ENCODE measurements at regions of chr19 and their contacts with region 1.

Region 1: GRCh38 chr19:4352701-4353121 is 9.3 kb downstream of the MPND start:
- DNase-seq: peak; percentile 70
- H3K4me3 Mint-ChIP-seq: no peak overlapping the region
- H3K27ac Mint-ChIP-seq: no peak overlapping the region
- H3K4me1 Mint-ChIP-seq: peaks cover 2% of the 10 kb centered on the region
- H3K27me3 Mint-ChIP-seq: peaks cover 2% of the 10 kb centered on the region

Region 2: DNA sequence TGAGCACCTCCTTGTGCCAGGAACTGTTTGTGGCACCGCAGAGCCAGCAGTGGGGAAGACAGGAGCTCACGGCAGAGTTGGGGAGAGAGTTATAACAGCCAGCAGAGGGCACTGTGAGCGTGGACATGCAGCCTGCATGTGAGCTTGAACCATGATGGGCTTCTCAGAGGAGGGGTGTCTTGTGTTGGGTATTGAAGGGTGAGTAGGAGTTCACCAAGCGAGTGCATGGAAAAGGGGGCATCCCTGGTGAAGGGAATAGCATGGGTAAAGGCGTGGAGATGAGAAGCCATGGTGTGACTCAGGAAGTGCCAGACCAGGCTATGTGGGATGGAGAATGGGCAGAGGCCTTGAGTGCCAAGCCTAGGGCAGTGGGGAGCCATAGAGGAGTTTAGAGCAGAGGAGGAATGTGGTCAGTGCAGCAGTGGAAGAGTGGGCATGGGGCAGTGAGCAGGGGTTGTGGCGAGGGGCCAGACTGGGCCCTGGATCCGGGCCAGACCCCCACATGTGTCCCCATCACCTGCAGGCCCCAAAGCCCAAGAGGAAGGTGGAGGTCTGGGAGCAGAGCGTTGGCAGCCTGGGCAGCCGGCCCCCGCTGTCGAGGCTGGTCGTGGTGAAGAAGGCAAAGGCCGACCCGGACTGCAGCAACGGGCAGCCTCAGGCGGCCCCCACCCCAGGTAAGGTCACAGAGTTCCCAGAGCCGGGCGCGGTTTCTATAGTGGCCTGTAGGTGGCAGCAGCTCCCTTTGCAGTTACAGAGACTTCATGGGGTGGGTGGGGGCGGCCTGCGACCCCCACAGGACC is 85.4 kb before region 1 on chr19:
- CTCF ChIA-PET with region 1: interaction called, 72 read pairs
- DNase-seq: peak; percentile 77
- H3K4me3 Mint-ChIP-seq: no peak overlapping the region
- H3K27ac Mint-ChIP-seq: peak overlapping the region; percentile 42
- H3K4me1 Mint-ChIP-seq: peaks cover 30% of the 10 kb centered on the region
- H3K27me3 Mint-ChIP-seq: no peaks in the 10 kb centered on the region

Region 3: GRCh38 chr19:4319067-4319718 is 33.5 kb before region 1 on chr19:
- CTCF ChIA-PET with region 1: interaction called, 12 read pairs
- DNase-seq: no peak
- H3K4me3 Mint-ChIP-seq: no peak overlapping the region
- H3K27ac Mint-ChIP-seq: no peak overlapping the region
- H3K4me1 Mint-ChIP-seq: no peaks in the 10 kb centered on the region
- H3K27me3 Mint-ChIP-seq: no peaks in the 10 kb centered on the region

Region 4: GRCh38 chr19:4329858-4330257 is 22.9 kb before region 1 on chr19:
- CTCF ChIA-PET with region 1: no interaction called
- DNase-seq: no peak
- H3K4me3 Mint-ChIP-seq: no peak overlapping the region
- H3K27ac Mint-ChIP-seq: peak overlapping the region; percentile 69
- H3K4me1 Mint-ChIP-seq: peaks cover 35% of the 10 kb centered on the region
- H3K27me3 Mint-ChIP-seq: peaks cover 27% of the 10 kb centered on the region

Region 5: GRCh38 chr19:4365341-4365740 is 12.6 kb after region 1 on chr19:
- CTCF ChIA-PET with region 1: interaction called, 16 read pairs
- DNase-seq: no peak
- H3K4me3 Mint-ChIP-seq: no peak overlapping the region
- H3K27ac Mint-ChIP-seq: no peak overlapping the region
- H3K4me1 Mint-ChIP-seq: peaks cover 37% of the 10 kb centered on the region
- H3K27me3 Mint-ChIP-seq: no peaks in the 10 kb centered on the region

Region 6: GRCh38 chr19:4471403-4472173 is 118.9 kb after region 1 on chr19:
- CTCF ChIA-PET with region 1: no interaction called
- DNase-seq: peak; percentile 99
- H3K4me3 Mint-ChIP-seq: no peak overlapping the region
- H3K27ac Mint-ChIP-seq: no peak overlapping the region
- H3K4me1 Mint-ChIP-seq: peaks cover 20% of the 10 kb centered on the region
- H3K27me3 Mint-ChIP-seq: no peaks in the 10 kb centered on the region